Heart left ventricle (tissue), 16 donors: ENCODE measurements at regions of chr1 and their contacts with region 1.

Region 1: GRCh38 chr1:206725109-206725963 is 40.6 kb downstream of the MAPKAPK2 start:
- DNase-seq: peak in 1 of 5 donors; percentile 65
- ATAC-seq: no peak
- H3K4me3 ChIP-seq: no peak overlapping the region
- H3K27ac ChIP-seq: peak overlapping the region in 9 of 12 donors; percentile 14 to 95 (median 84)
- H3K4me1 ChIP-seq: peaks cover 14 to 89% (median 80%) of the 10 kb centered on the region in 12 donors
- H3K27me3 ChIP-seq: no peaks in the 10 kb centered on the region
- CTCF ChIP-seq: peak in 11 of 12 donors; percentile 30 to 66 (median 56)
- POLR2A ChIP-seq: no peak

Region 2: GRCh38 chr1:206658264-206658980 is 66.9 kb before region 1 on chr1:
- intact Hi-C with region 1: loop called in 4 of 10 experiments (anchors 1 to 10 kb)
- DNase-seq: peak; percentile 60 to 82 (median 64)
- ATAC-seq: peak; percentile 48 to 59 (median 56)
- H3K4me3 ChIP-seq: peak overlapping the region in 9 of 12 donors; percentile 1 to 46 (median 31)
- H3K27ac ChIP-seq: peak overlapping the region; percentile 78 to 96 (median 88)
- H3K4me1 ChIP-seq: peaks cover 5 to 92% (median 59%) of the 10 kb centered on the region in 12 donors
- H3K27me3 ChIP-seq: no peaks in the 10 kb centered on the region
- CTCF ChIP-seq: peak; percentile 69 to 90 (median 87)
- POLR2A ChIP-seq: peak in 1 of 2 donors; percentile 17

Region 3: DNA sequence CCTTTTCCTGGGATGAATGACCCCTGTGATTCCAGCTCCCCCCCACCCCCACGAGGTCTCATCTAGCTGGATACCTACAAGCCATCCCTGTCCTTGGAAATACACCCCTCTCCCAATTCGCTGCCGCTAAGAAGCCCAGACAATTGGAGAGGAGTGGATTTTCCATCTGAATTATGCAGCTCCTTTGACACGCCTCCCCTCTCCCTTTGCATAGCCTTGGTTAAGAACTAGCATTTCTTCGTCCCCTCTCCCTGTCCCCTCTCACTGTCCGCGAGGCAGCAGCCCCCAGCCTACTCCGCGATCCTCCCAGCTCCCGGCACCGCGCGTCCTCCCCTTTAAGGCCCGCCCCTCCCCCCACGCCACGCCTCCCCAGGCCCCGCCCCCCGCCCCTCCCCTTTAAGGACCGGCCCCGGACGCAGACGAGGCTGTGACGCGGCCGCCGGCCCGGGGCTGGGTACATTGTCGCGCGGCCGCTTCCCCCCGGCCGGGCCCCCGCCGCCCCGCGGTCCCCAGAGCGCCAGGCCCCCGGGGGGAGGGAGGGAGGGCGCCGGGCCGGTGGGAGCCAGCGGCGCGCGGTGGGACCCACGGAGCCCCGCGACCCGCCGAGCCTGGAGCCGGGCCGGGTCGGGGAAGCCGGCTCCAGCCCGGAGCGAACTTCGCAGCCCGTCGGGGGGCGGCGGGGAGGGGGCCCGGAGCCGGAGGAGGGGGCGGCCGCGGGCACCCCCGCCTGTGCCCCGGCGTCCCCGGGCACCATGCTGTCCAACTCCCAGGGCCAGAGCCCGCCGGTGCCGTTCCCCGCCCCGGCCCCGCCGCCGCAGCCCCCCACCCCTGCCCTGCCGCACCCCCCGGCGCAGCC is 40.6 kb before region 1 on chr1 and contains the start of gene MAPKAPK2:
- intact Hi-C with region 1: loop called in 6 of 10 experiments (anchors 2 to 5 kb)
- DNase-seq: peak; percentile 85 to 91 (median 90)
- ATAC-seq: peak; percentile 59 to 88 (median 77)
- H3K4me3 ChIP-seq: peak within 1 kb of the TSS; percentile 42 to 97 (median 84)
- H3K27ac ChIP-seq: peak within 1 kb of the TSS; percentile 90 to 99 (median 98)
- H3K4me1 ChIP-seq: peaks cover 8 to 60% (median 36%) of the 10 kb centered on the region in 12 donors
- H3K27me3 ChIP-seq: no peaks in the 10 kb centered on the region
- CTCF ChIP-seq: no peak
- POLR2A ChIP-seq: peak in 1 of 2 donors; percentile 53
- total RNA-seq, gene MAPKAPK2: 163 to 327 (median 223) TPM

Region 4: DNA sequence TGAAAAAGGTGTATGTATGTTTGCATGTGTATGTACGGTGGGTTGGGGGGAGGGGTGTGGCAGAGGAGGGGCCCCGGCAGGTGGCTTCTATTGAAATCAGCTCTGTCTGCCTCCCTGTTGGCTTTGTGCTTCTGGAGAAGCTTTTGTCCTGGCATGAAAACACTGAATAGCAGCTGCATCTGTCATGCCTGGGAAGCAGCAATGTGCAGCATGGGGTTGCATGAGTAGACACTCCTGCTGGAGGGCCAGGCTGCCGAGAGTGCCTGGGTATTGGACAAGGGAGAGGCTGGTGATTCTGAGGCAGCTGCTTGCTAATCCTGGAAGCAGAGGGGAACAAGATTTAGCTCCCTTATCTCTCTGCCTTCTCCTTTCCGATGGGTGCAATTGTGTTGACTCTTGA is 20.1 kb before region 1 on chr1:
- intact Hi-C with region 1: loop called in 1 of 10 experiments (anchors 2 kb)
- DNase-seq: peak in 1 of 5 donors; percentile 56
- ATAC-seq: peak; percentile 18 to 63 (median 28)
- H3K4me3 ChIP-seq: no peak overlapping the region
- H3K27ac ChIP-seq: peak overlapping the region in 11 of 12 donors; percentile 42 to 82 (median 70)
- H3K4me1 ChIP-seq: peaks cover 47 to 100% (median 94%) of the 10 kb centered on the region in 12 donors
- H3K27me3 ChIP-seq: no peaks in the 10 kb centered on the region
- CTCF ChIP-seq: no peak
- POLR2A ChIP-seq: no peak